ENCODE measurements at regions of chr9 and their contacts with region 1.

Region 1: DNA sequence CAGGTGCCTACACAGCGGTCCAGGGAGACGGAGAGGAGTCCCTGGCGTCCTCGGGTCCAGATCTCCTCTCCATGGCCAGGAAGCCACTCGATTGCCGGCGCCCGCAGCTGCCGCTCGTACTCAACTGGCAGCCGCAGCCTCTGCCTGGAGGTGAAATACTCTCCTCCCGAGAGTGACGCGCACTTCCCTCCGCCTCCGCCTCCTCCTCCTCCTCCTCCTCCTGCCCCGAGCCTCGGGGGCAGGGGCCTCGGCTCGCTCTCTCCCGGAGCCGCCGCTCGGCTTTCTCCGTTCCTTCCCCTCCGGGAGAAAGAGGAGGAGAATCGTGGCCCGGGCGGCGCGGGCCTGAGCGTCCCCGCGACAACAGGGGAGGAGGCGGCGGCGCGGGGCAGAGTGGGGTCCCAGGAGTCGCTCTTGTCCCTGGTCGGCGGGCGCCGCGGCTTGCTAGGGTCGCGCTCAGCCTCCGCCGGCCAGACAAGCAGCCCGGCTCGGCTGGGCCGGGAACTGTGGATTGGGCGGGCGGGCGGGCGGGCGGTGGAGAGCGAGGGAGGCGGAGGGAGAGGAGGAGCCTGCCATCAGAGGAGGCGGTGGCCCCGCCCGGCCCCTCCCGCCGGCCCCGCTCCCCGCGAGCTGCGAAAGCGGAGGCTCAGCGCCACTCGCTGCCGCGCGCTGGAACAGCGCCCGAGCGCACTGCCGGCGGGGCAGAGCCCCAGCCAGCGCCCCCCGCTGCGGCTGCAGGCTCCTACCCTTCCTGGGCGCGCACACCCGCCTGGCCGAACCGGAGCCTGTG is at the start of gene CEMIP2:
- DNase-seq: peak; percentile 72 to 93 (median 86)
- H3K4me3 ChIP-seq: peak within 1 kb of the TSS; percentile 71 to 97 (median 88)
- H3K27ac ChIP-seq: peak within 1 kb of the TSS in 58 of 59 donors; percentile 77 to 98 (median 92)
- H3K27me3 ChIP-seq: no peaks in the 10 kb centered on the region
- CTCF ChIP-seq: peak in 50 of 56 donors; percentile 16 to 74 (median 52)
- total RNA-seq, gene CEMIP2: 20.5 to 81.8 (median 47.2) TPM

Region 2: GRCh38 chr9:71285191-71285656 is 483.4 kb before region 1 on chr9:
- intact Hi-C with region 1: loop called in 1 of 2 experiments (anchors 5 kb)
- DNase-seq: peak in 5 of 10 donors; percentile 12 to 64 (median 44)
- H3K4me3 ChIP-seq: peak overlapping the region in 12 of 59 donors; percentile 5 to 44 (median 28)
- H3K27ac ChIP-seq: peak overlapping the region in 11 of 59 donors; percentile 7 to 73 (median 40)
- H3K27me3 ChIP-seq: no peaks in the 10 kb centered on the region
- CTCF ChIP-seq: peak; percentile 60 to 94 (median 81)

Region 3: DNA sequence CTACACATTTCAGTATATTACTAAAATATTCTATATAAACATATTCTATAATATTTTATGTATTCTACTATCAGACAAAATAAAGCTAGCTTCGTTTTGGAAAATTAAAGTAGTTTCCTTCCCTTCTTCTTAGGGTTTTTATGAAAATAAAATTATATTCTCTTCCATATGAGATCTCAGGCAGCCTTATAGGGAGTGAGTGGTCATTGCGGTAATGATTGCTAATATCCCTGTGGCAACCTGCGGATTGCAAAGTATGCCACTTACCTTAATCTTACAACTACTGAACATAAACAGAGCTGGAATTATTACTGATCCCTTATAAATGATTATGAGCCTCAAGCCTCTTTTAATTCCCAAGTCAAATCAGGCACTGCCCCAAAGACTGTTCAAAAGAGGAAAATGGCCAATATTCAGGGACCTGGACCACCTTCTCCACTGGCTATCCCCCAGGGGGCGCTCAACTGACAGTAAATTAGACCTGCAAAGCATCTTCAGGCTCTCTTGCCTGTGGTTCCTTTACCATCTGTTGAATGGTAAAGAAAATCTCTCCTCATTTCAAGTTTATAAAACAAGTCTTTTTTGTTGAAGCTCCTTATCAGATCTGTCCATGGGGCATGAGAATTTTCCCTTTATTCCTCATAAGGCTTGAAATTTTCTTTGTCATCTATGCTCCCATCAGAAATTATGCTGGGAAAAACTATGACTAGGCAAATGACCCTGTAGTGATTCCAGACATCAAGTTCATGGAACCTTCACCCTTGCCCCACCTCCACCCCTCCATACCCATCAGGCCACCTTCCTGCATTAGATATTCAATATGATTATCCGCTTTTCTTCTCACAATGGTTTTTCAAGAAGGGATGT is 164.2 kb before region 1 on chr9:
- intact Hi-C with region 1: loop called (anchors 2 kb)
- DNase-seq: peak in 9 of 10 donors; percentile 18 to 75 (median 53)
- H3K4me3 ChIP-seq: no peak overlapping the region
- H3K27ac ChIP-seq: no peak overlapping the region
- H3K27me3 ChIP-seq: no peaks in the 10 kb centered on the region
- CTCF ChIP-seq: peak; percentile 41 to 87 (median 75)

Region 4: GRCh38 chr9:71716138-71716909 is 52.3 kb before region 1 on chr9:
- intact Hi-C with region 1: loop called in 1 of 2 experiments (anchors 5 kb)
- DNase-seq: no peak
- H3K4me3 ChIP-seq: no peak overlapping the region
- H3K27ac ChIP-seq: peak overlapping the region in 2 of 59 donors; percentile 1 to 2
- H3K27me3 ChIP-seq: no peaks in the 10 kb centered on the region
- CTCF ChIP-seq: peak; percentile 23 to 69 (median 48)

Region 5: GRCh38 chr9:71748280-71748743 is 20.3 kb before region 1 on chr9:
- intact Hi-C with region 1: no loop called
- DNase-seq: no peak
- H3K4me3 ChIP-seq: no peak overlapping the region
- H3K27ac ChIP-seq: peak overlapping the region in 17 of 59 donors; percentile 3 to 56 (median 23)
- H3K27me3 ChIP-seq: no peaks in the 10 kb centered on the region
- CTCF ChIP-seq: no peak

Region 6: DNA sequence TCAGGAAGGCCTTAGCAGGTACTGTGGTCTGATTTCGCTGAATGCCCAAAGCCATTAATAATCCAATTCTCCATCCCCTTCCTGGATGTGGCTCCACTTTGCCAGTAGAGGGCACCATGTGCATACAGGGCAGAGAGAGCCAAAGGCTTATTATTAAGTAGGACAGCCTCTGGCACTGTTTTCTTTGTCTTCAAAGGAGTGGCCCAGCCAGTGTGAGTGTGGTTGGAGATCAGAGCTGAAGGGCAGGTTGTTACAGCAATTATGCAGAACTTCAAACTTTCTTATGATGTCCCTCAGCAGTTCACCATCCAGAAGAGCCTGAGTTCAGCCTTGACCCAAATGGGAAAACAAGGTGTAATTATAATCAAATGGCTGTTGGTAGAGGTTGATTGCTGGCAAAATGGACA is 38.3 kb after region 1 on chr9:
- intact Hi-C with region 1: loop called in 1 of 2 experiments (anchors 5 kb)
- DNase-seq: peak; percentile 32 to 75 (median 58)
- H3K4me3 ChIP-seq: peak overlapping the region in 1 of 59 donors; percentile 3
- H3K27ac ChIP-seq: peak overlapping the region in 1 of 59 donors; percentile 29
- H3K27me3 ChIP-seq: no peaks in the 10 kb centered on the region
- CTCF ChIP-seq: peak; percentile 56 to 99 (median 84)

Region 7: GRCh38 chr9:71819115-71819739 is 50.6 kb after region 1 on chr9:
- intact Hi-C with region 1: loop called in 1 of 2 experiments (anchors 5 kb)
- DNase-seq: peak in 3 of 10 donors; percentile 17 to 43 (median 38)
- H3K4me3 ChIP-seq: no peak overlapping the region
- H3K27ac ChIP-seq: no peak overlapping the region
- H3K27me3 ChIP-seq: no peaks in the 10 kb centered on the region
- CTCF ChIP-seq: peak; percentile 62 to 94 (median 80)

Measured in dorsolateral prefrontal cortex (tissue), 120 donors.